B cell (primary cell): ENCODE measurements at regions of chr17 and their contacts with region 1.

Region 1: DNA sequence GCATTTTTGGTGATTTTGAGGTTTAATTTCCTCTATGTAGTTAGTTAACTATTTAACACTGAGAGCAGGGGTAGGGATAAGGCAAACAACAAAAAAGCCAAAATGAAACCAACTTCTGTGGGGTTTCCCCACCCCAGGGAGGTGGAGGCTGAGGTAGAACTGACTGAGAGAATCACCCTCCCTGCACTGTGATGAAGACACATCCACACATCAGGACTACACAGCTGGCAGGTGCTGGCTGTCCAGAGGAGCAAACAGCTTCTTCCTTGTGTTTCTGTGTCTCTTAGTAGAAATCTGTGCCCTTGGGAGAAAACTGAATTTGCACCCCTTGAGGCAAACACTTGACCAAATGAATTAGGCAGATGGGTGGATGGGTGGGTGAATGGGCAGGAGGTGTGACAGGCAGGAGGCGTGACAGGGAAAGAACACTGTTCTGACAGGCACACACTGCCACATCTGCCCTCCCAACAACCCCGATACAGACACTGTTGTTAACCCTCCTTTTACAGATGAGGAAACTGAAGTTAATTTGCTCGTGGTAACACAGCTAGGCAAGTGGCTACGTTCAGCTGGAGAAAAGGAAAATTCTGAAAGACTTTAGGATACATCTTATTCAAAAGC is 62.9 kb upstream of the AMZ2 start:
- DNase-seq: peak; percentile 72
- ATAC-seq: peak; percentile 50
- H3K4me3 ChIP-seq: no peak overlapping the region
- H3K4me3 Mint-ChIP-seq: peak overlapping the region; percentile 96
- H3K27ac ChIP-seq: peak overlapping the region; percentile 27 to 56
- H3K27ac Mint-ChIP-seq: peak overlapping the region; percentile 83
- H3K4me1 ChIP-seq: peaks cover 53 to 59% of the 10 kb centered on the region in 2 donors
- H3K4me1 Mint-ChIP-seq: peaks cover 59% of the 10 kb centered on the region
- H3K27me3 ChIP-seq: no peaks in the 10 kb centered on the region
- H3K27me3 Mint-ChIP-seq: no peaks in the 10 kb centered on the region
- CTCF ChIP-seq: no peak

Region 2: DNA sequence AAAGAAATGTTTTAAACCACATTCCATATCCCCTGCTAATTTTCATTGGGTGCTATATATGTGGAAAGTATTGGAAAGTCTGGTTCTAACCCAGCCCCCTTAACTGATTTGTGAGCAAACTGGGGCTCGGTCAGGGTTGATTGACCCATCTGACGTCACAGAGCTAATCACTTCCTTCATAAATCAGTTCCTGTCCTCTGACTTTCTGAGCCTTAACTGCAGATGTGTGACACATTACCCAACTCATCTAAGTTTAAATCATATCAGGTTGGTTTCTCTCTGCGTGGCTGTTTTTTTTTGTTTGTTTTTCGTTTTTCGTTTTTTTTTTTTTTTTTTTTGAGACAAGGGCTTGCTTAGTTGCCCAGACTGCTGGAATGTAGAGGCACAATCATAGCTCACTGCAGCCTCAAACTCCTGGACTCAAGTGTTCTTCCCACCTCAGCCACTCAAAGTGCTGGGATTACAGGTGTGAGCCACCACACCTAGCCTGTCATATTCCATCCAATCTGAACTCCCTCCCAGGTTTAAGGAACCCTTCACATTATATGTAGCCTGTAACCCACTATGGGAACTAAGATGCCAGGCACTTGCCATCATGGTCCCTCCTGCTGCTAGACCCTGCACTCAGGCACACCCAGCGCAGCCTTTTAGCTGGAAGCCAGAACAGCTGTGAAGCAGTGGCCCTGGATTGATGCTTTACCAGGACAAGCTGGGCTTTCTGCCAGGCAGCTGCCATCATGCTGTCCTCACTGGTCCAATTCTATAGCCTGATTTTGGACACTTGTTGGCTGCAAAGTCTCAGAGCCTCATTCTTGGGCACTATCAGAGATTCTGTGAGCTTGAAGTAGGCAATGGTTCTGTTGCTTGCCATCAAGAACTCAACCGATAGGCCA is 366.6 kb before region 1 on chr17:
- CTCF ChIA-PET with region 1: no interaction called
- POLR2A ChIA-PET with region 1: interaction called, 9 read pairs
- intact Hi-C with region 1: loop called (anchors 10 kb)
- DNase-seq: peak; percentile 93
- ATAC-seq: peak; percentile 60
- H3K4me3 ChIP-seq: peak overlapping the region in 2 of 5 experiments; percentile 10 to 29
- H3K4me3 Mint-ChIP-seq: peak overlapping the region; percentile 73
- H3K27ac ChIP-seq: peak overlapping the region; percentile 71 to 78
- H3K27ac Mint-ChIP-seq: peak overlapping the region; percentile 92
- H3K4me1 ChIP-seq: peaks cover 56 to 73% of the 10 kb centered on the region in 2 donors
- H3K4me1 Mint-ChIP-seq: peaks cover 65% of the 10 kb centered on the region
- H3K27me3 ChIP-seq: no peaks in the 10 kb centered on the region
- H3K27me3 Mint-ChIP-seq: no peaks in the 10 kb centered on the region
- CTCF ChIP-seq: no peak

Region 3: DNA sequence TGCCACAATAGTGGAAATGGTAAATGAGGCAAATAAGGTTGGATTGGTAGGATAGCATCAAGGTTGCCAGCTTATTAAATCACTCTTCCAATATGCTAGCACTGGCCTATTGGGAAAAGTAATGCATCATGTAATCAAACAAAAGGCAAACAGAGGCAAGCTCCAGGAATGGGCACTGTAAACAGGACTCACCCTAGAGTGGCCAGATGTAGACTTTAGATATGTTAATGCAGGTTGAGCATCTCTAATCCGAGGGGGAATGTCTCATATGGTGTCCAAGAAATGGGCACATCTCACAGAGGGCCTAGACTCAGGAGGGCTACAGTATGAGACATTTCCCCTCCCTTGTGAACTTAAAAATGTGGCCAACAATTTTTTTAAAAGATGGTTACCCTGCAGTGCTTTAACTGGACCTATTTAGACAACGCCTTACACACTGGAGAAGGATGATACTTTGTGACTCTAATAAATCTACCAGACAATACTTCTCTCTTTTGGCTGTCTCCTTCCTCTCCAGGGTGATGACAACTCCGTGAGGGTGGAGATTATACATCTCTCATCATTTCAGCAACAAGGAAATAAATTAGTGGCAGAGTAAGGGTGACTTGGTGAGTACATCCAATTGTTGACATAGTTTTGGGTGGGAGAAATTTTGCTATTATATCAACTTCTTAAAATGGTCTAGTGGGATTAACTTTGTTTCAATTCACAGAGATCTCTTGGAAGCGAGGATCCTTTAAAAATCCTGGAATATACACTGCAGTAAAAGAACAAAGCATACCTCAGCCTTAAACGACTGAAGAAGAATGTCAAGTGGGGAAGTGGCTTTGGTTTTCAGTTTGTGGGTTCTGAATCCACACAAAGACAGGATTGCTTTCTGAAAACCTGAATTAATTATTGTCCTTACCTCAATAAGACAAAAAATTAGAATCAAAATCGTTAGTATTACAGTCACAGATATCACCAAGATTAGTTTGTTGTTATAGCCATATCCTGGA is 59.8 kb before region 1 on chr17:
- CTCF ChIA-PET with region 1: no interaction called
- POLR2A ChIA-PET with region 1: interaction called, 10 read pairs
- intact Hi-C with region 1: no loop called
- DNase-seq: no peak
- ATAC-seq: no peak
- H3K4me3 ChIP-seq: no peak overlapping the region
- H3K4me3 Mint-ChIP-seq: no peak overlapping the region
- H3K27ac ChIP-seq: no peak overlapping the region
- H3K27ac Mint-ChIP-seq: no peak overlapping the region
- H3K4me1 ChIP-seq: no peaks in the 10 kb centered on the region
- H3K4me1 Mint-ChIP-seq: no peaks in the 10 kb centered on the region
- H3K27me3 ChIP-seq: no peaks in the 10 kb centered on the region
- H3K27me3 Mint-ChIP-seq: no peaks in the 10 kb centered on the region
- CTCF ChIP-seq: no peak

Region 4: GRCh38 chr17:68141050-68141449 is 43.9 kb before region 1 on chr17:
- CTCF ChIA-PET with region 1: no interaction called
- POLR2A ChIA-PET with region 1: no interaction called
- intact Hi-C with region 1: no loop called
- DNase-seq: no peak
- ATAC-seq: no peak
- H3K4me3 ChIP-seq: no peak overlapping the region
- H3K4me3 Mint-ChIP-seq: no peak overlapping the region
- H3K27ac ChIP-seq: no peak overlapping the region
- H3K27ac Mint-ChIP-seq: no peak overlapping the region
- H3K4me1 ChIP-seq: no peaks in the 10 kb centered on the region
- H3K4me1 Mint-ChIP-seq: no peaks in the 10 kb centered on the region
- H3K27me3 ChIP-seq: no peaks in the 10 kb centered on the region
- H3K27me3 Mint-ChIP-seq: no peaks in the 10 kb centered on the region
- CTCF ChIP-seq: no peak

Region 5: DNA sequence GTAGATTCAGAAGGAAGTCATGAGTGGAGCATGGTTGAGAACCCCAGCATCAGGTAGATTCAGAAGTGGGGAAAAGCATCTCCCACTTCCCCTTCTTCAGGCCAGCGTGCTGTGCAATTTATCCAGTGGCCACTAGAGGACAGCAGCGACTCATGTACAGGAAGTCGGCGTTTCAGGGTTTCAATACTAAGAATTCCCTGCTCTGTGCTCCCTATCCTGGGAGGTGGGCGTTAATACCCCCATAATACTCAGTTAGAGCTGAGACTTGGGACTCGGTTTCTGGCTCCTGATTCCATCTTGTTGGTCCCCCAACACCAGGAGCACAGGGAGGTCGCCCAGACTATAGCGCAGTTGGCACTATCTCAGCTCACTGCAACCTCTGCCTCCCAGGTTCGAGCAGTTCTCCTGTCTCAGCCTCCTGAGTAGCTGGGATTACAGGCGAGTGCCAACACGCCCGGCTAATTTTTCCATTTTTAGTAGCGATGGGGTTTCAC is 12.4 kb before region 1 on chr17:
- CTCF ChIA-PET with region 1: interaction called, 31 read pairs
- POLR2A ChIA-PET with region 1: interaction called, 3 read pairs
- intact Hi-C with region 1: loop called (anchors 1 kb)
- DNase-seq: peak; percentile 87
- ATAC-seq: peak; percentile 94
- H3K4me3 ChIP-seq: no peak overlapping the region
- H3K4me3 Mint-ChIP-seq: no peak overlapping the region
- H3K27ac ChIP-seq: no peak overlapping the region
- H3K27ac Mint-ChIP-seq: no peak overlapping the region
- H3K4me1 ChIP-seq: peaks cover 0 to 9% of the 10 kb centered on the region in 2 donors
- H3K4me1 Mint-ChIP-seq: peaks cover 3% of the 10 kb centered on the region
- H3K27me3 ChIP-seq: no peaks in the 10 kb centered on the region
- H3K27me3 Mint-ChIP-seq: no peaks in the 10 kb centered on the region
- CTCF ChIP-seq: peak; percentile 99

Region 6: GRCh38 chr17:68196944-68197595 is 12.1 kb after region 1 on chr17:
- CTCF ChIA-PET with region 1: interaction called, 153 read pairs
- POLR2A ChIA-PET with region 1: interaction called, 113 read pairs
- intact Hi-C with region 1: loop called (anchors 1 kb)
- DNase-seq: peak; percentile 62
- ATAC-seq: peak; percentile 22
- H3K4me3 ChIP-seq: peak overlapping the region in 4 of 5 experiments; percentile 39 to 72 (median 56)
- H3K4me3 Mint-ChIP-seq: peak overlapping the region; percentile 96
- H3K27ac ChIP-seq: no peak overlapping the region
- H3K27ac Mint-ChIP-seq: no peak overlapping the region
- H3K4me1 ChIP-seq: peaks cover 50 to 56% of the 10 kb centered on the region in 2 donors
- H3K4me1 Mint-ChIP-seq: peaks cover 45% of the 10 kb centered on the region
- H3K27me3 ChIP-seq: peaks cover 0 to 48% (median 17%) of the 10 kb centered on the region in 4 experiments
- H3K27me3 Mint-ChIP-seq: peaks cover 7% of the 10 kb centered on the region
- CTCF ChIP-seq: no peak

Region 7: DNA sequence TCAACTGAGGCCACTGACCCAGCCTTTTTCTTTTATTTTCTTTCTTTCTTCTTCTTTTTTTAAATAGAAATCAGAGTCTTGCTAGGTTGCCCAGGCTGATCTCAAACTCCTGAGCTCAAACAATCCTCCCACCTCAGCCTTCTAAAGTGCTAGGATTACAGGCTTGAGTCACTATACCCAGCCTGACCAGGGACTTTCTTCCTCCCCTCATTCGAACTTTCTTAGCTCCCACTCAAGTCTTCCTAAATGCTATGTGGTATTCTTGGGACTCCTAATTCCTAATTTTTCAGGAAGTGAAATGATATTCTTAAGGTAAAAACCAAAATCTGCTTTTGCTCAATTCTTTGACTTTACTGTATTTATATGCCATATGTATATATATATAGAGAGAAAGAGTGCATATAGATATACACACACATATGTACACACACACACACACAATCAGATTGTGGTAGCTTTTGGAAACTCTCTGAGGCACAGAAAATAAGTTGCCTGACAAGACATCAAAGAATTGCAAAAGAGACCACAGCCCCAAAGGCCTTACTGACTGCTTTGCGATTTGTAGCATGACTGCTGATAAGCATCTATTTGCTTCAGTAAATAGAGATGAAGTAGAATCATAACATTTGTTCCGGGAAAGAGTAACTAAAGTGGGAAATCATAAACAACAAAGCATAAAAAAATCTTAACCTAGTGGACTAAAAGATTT is 53.4 kb after region 1 on chr17:
- CTCF ChIA-PET with region 1: interaction called, 4 read pairs
- POLR2A ChIA-PET with region 1: interaction called, 15 read pairs
- intact Hi-C with region 1: loop called (anchors 2 kb)
- DNase-seq: no peak
- ATAC-seq: no peak
- H3K4me3 ChIP-seq: peak overlapping the region; percentile 11 to 61 (median 49)
- H3K4me3 Mint-ChIP-seq: peak overlapping the region; percentile 85
- H3K27ac ChIP-seq: peak overlapping the region; percentile 99 to 100
- H3K27ac Mint-ChIP-seq: peak overlapping the region; percentile 99
- H3K4me1 ChIP-seq: peaks cover 42 to 60% of the 10 kb centered on the region in 2 donors
- H3K4me1 Mint-ChIP-seq: peaks cover 65% of the 10 kb centered on the region
- H3K27me3 ChIP-seq: no peaks in the 10 kb centered on the region
- H3K27me3 Mint-ChIP-seq: no peaks in the 10 kb centered on the region
- CTCF ChIP-seq: no peak

Region 8: DNA sequence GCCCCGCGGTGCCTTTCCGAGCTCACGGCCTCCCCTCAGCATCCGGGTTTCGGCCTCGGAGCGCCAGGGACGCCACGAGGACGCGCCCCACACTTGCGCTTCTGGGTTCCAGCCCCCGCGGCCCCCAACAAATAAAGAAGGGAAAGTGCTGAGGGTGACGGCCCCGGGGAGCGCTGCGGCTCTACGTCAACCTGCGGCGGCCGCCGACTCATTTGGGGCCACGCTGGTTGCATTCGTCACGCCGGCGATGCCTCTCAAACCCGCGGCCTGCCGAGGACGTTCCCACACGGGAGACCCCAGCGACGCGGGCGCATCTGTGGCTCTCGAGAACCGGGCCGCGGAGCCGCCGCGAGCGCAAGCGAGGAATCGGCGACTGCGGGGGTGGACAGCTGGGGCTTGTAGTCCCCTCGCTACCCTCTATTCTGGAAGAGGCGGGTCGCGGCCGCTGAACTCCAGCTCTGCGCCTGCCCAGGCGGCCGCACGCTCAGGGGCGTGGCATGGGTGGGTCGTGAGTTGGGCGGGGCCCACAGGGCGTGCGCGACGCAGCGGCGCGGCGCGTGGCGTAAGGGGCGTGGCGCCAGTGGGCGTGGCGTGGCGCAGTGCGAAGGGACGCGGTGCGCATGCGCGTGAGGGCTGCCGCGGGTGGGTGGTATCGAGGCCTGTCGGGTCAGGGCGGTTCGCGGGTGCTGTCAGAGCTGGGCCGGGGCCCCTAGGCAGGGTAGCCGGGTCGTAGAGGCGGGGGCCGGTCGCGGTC is 62.7 kb after region 1 on chr17 and contains the start of gene AMZ2:
- CTCF ChIA-PET with region 1: interaction called, 15 read pairs
- POLR2A ChIA-PET with region 1: interaction called, 27 read pairs
- intact Hi-C with region 1: loop called (anchors 2 kb)
- DNase-seq: peak; percentile 99
- ATAC-seq: peak; percentile 89
- H3K4me3 ChIP-seq: peak within 1 kb of the TSS; percentile 24 to 81 (median 76)
- H3K4me3 Mint-ChIP-seq: peak within 1 kb of the TSS; percentile 96
- H3K27ac ChIP-seq: peak within 1 kb of the TSS; percentile 96 to 98
- H3K27ac Mint-ChIP-seq: peak within 1 kb of the TSS; percentile 99
- H3K4me1 ChIP-seq: peaks cover 31 to 34% of the 10 kb centered on the region in 2 donors
- H3K4me1 Mint-ChIP-seq: peaks cover 54% of the 10 kb centered on the region
- H3K27me3 ChIP-seq: no peaks in the 10 kb centered on the region
- H3K27me3 Mint-ChIP-seq: no peaks in the 10 kb centered on the region
- CTCF ChIP-seq: no peak
- total RNA-seq, gene AMZ2: 70.7 and 74.3 TPM in 2 replicates